ENCODE measurements at regions of chr3 and their contacts with region 1.

Region 1: GRCh38 chr3:14947886-14948555 is 638 bp downstream of the NR2C2 start:
- DNase-seq: peak; percentile 96
- ATAC-seq: peak; percentile 88
- H3K4me3 Mint-ChIP-seq: peak overlapping the region; percentile 99
- H3K27ac Mint-ChIP-seq: peak overlapping the region; percentile 100
- H3K4me1 Mint-ChIP-seq: peaks cover 55% of the 10 kb centered on the region
- H3K27me3 Mint-ChIP-seq: no peaks in the 10 kb centered on the region
- CTCF ChIP-seq: no peak

Region 2: DNA sequence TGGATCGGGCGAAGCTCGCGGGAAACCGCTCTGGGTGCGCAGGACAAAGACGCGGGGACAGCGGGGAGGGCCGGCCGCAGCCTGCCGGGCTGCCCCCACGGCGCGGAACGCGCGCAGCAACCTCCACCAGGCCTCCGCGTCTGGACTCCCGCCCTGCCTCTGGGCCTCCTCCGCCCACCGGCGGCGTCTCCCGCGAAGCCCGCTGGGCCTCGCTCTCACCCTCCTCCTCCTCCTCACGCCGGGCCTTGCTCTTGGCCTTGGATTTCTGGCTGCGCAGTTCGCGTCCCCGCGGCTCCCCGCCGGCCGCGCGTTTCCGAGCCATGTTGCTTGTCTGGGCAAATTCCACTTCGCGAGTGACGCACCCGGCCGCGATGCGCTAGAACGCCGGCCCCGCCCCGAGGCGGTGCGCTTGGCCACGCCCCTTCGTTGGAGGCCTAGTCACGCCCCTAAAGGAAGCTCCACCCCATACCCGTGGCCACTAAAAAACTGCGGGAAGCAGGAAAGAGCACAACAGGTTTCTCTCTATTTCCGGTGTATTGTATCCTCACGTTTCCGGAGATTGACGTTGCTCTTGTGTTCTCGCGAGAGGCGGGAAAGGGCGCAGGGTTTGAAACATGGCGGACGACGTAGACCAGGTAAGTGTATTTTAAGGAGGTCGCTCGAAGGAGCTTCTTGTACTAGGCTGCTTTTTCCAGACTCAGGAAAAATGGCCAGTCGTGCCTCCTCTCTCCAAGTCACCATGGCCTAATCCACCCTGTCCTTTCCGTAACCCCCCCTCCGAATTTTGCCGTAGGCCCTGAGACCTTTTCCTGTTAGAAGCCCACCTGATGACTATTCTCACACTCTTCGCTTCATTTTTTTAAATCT is 769.5 kb before region 1 on chr3 and contains the starts of genes LSM3 and XPC:
- CTCF ChIA-PET with region 1: no interaction called
- POLR2A ChIA-PET with region 1: interaction called, 4 read pairs
- intact Hi-C with region 1: loop called (anchors 1 kb)
- DNase-seq: peak; percentile 98
- ATAC-seq: peak; percentile 96
- H3K4me3 Mint-ChIP-seq: peak within 1 kb of the TSS; percentile 97
- H3K27ac Mint-ChIP-seq: peak within 1 kb of the TSS; percentile 98
- H3K4me1 Mint-ChIP-seq: peaks cover 63% of the 10 kb centered on the region
- H3K27me3 Mint-ChIP-seq: no peaks in the 10 kb centered on the region
- CTCF ChIP-seq: no peak
- total RNA-seq, gene LSM3: 12.9 and 14.2 TPM in 2 replicates
- total RNA-seq, gene XPC: 35.4 and 35.6 TPM in 2 replicates

Region 3: GRCh38 chr3:14651440-14652251 is 296.4 kb before region 1 on chr3 and contains the start of gene CCDC174:
- CTCF ChIA-PET with region 1: no interaction called
- POLR2A ChIA-PET with region 1: interaction called, 11 read pairs
- intact Hi-C with region 1: loop called (anchors 1 kb)
- DNase-seq: peak; percentile 86
- ATAC-seq: peak; percentile 97
- H3K4me3 Mint-ChIP-seq: peak within 1 kb of the TSS; percentile 95
- H3K27ac Mint-ChIP-seq: peak within 1 kb of the TSS; percentile 93
- H3K4me1 Mint-ChIP-seq: peaks cover 34% of the 10 kb centered on the region
- H3K27me3 Mint-ChIP-seq: no peaks in the 10 kb centered on the region
- CTCF ChIP-seq: no peak
- total RNA-seq, gene CCDC174: 30.2 and 32.4 TPM in 2 replicates

Region 4: DNA sequence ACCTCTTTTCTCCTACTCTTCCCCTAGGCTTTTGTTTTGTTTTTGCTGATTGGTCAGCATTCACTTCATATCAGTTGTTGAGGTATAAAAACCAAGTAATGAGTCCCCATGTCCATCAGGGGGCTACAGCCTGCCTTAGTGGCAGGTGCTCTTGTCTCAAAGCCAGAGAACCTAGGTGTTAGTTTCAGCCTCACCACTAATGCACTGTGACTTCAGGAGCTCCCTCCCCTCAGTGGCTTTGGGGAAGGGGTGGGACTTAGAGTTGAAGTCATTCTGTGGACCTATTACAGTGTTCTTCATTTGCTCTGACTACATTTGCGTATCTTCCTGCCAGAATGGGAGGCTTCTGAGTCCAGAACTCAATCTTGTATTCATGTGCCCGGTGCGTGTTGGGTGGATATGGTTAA is 41.0 kb after region 1 on chr3:
- CTCF ChIA-PET with region 1: no interaction called
- POLR2A ChIA-PET with region 1: interaction called, 12 read pairs
- intact Hi-C with region 1: loop called (anchors 1 kb)
- DNase-seq: peak; percentile 21
- ATAC-seq: peak; percentile 99
- H3K4me3 Mint-ChIP-seq: peak overlapping the region; percentile 45
- H3K27ac Mint-ChIP-seq: peak overlapping the region; percentile 67
- H3K4me1 Mint-ChIP-seq: peaks cover 45% of the 10 kb centered on the region
- H3K27me3 Mint-ChIP-seq: no peaks in the 10 kb centered on the region
- CTCF ChIP-seq: no peak

Region 5: GRCh38 chr3:15098503-15099363 is 150.7 kb after region 1 on chr3 and contains the start of gene RBSN:
- CTCF ChIA-PET with region 1: no interaction called
- POLR2A ChIA-PET with region 1: interaction called, 12 read pairs
- intact Hi-C with region 1: loop called (anchors 1 kb)
- DNase-seq: peak; percentile 89
- ATAC-seq: peak; percentile 79
- H3K4me3 Mint-ChIP-seq: peak within 1 kb of the TSS; percentile 96
- H3K27ac Mint-ChIP-seq: peak within 1 kb of the TSS; percentile 89
- H3K4me1 Mint-ChIP-seq: peaks cover 27% of the 10 kb centered on the region
- H3K27me3 Mint-ChIP-seq: peaks cover 7% of the 10 kb centered on the region
- CTCF ChIP-seq: no peak
- total RNA-seq, gene RBSN: 19.8 and 29.0 TPM in 2 replicates

Region 6: GRCh38 chr3:15859507-15860013 is 911.5 kb after region 1 on chr3:
- CTCF ChIA-PET with region 1: no interaction called
- POLR2A ChIA-PET with region 1: no interaction called
- intact Hi-C with region 1: loop called (anchors 10 kb)
- DNase-seq: peak; percentile 77
- ATAC-seq: peak; percentile 77
- H3K4me3 Mint-ChIP-seq: peak overlapping the region; percentile 99
- H3K27ac Mint-ChIP-seq: peak overlapping the region; percentile 95
- H3K4me1 Mint-ChIP-seq: peaks cover 27% of the 10 kb centered on the region
- H3K27me3 Mint-ChIP-seq: no peaks in the 10 kb centered on the region
- CTCF ChIP-seq: no peak